Heart right ventricle (tissue), 16 donors: ENCODE measurements at regions of chr19 and their contacts with region 1.

Region 1: GRCh38 chr19:44051654-44052402 is at the start of gene ZNF223:
- DNase-seq: peak; percentile 92 to 97
- ATAC-seq: peak; percentile 100
- H3K4me3 ChIP-seq: peak within 1 kb of the TSS; percentile 52 to 81 (median 71)
- H3K27ac ChIP-seq: peak within 1 kb of the TSS in 9 of 10 donors; percentile 49 to 82 (median 64)
- H3K4me1 ChIP-seq: peaks cover 3 to 21% (median 12%) of the 10 kb centered on the region in 9 donors
- H3K27me3 ChIP-seq: peaks cover 0 to 37% (median 18%) of the 10 kb centered on the region in 7 donors
- CTCF ChIP-seq: no peak
- total RNA-seq, gene ZNF223: 2.3 to 5.4 (median 3.2) TPM

Region 2: GRCh38 chr19:44093931-44094765 is 42.3 kb after region 1 on chr19 and contains the start of gene ZNF224:
- intact Hi-C with region 1: loop called in 1 of 10 experiments (anchors 5 kb)
- DNase-seq: peak; percentile 87 to 95
- ATAC-seq: peak; percentile 98 to 100 (median 99)
- H3K4me3 ChIP-seq: peak within 1 kb of the TSS; percentile 74 to 94 (median 84)
- H3K27ac ChIP-seq: peak within 1 kb of the TSS; percentile 38 to 91 (median 80)
- H3K4me1 ChIP-seq: peaks cover 3 to 21% (median 12%) of the 10 kb centered on the region in 9 donors
- H3K27me3 ChIP-seq: no peaks in the 10 kb centered on the region
- CTCF ChIP-seq: no peak
- total RNA-seq, gene ZNF224: 8.1 to 16.0 (median 13.3) TPM

Region 3: DNA sequence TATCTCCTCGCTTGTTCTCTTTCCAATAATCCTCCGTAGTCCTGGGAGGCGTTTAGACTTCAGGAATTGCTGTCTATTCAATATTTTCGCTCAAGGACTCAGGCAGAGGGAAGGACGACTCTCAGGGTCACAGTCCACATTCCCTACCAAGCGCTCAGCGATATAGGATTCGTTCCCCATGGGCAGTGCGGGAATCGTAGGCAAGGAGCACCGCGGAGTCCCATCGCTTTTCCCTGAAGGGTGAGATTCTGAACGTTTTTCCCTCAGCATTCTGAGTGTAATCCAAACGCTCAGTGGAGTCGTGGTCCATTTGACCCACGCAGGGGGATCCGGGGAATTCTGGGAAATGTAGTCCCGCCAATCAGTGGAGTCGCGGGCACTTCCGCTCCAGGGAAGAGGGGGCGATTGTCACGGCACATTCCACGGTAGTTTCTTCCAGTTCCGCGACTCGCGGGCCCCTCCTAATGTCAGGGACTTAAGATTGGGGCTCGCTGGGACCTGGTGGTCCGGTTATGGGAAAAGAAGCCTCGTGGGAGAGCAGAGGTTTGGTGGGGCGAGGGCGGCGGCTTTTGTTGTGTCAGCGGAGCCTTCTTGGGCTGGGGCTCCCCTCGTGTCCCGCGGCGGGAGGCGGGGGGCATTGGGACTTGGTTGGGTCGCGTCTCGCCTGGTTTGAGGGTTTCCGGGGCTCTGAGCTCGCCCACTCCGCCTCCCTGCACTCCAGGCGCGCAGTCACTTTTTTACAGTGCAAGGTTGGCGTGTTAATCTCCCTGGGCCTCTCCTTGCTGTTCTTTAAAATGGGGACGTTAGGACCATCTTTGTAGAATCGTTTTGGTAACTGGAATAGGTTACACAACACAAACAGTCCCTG is 89.6 kb after region 1 on chr19 and contains the start of gene ZNF234:
- intact Hi-C with region 1: no loop called
- DNase-seq: peak; percentile 70 to 93
- ATAC-seq: peak; percentile 95 to 99 (median 98)
- H3K4me3 ChIP-seq: peak within 1 kb of the TSS; percentile 81 to 97 (median 93)
- H3K27ac ChIP-seq: peak within 1 kb of the TSS; percentile 24 to 92 (median 87)
- H3K4me1 ChIP-seq: peaks cover 0 to 37% (median 17%) of the 10 kb centered on the region in 9 donors
- H3K27me3 ChIP-seq: no peaks in the 10 kb centered on the region
- CTCF ChIP-seq: peak in 5 of 9 donors; percentile 6 to 27 (median 8)
- total RNA-seq, gene ZNF234: 8.0 to 13.4 (median 9.0) TPM